ENCODE measurements at regions of chr2 and their contacts with region 1.

Region 1: DNA sequence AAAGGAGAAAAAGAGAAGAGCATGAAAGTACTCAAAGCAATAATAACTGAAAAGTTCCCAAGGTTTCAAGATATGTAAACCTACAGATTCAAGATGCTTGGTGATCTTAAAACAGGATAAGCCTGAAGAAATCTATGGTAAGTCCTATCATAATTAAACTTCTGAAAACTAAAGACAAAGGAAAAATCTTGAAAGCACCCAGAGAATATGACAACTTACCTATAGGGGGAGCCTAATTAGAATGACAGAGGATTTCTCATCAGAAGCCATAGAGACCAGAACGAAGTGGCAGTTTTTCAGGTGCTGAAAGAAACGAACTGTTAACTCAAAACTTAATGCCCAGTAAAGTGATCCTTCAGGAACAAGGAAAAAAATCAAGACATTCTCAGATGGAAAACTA is 59.7 kb downstream of the XDH start:
- DNase-seq: peak; percentile 39 to 51
- ATAC-seq: peak; percentile 50 to 83; a peak in 3 of 6 replicates
- H3K4me3 ChIP-seq: no peak overlapping the region
- H3K27ac ChIP-seq: peak overlapping the region in 1 of 2 experiments; percentile 37; a peak in 2 of 6 replicates
- H3K4me1 ChIP-seq: 0 out of 3 replicates have a peak, but pooled peaks cover 9% of the 10 kb centered on the region
- CTCF ChIP-seq: peak; percentile 54
- EP300 ChIP-seq: no peak
- POLR2A ChIP-seq: no peak
- RAD21 ChIP-seq: peak; percentile 56 to 64

Region 2: GRCh38 chr2:31270136-31270535 is 84.7 kb before region 1 on chr2:
- CTCF ChIA-PET with region 1: no interaction called
- POLR2A ChIA-PET with region 1: no interaction called
- DNase-seq: no peak
- ATAC-seq: no peak
- H3K4me3 ChIP-seq: no peak overlapping the region
- H3K27ac ChIP-seq: no peak overlapping the region
- H3K4me1 ChIP-seq: no peaks in the 10 kb centered on the region
- CTCF ChIP-seq: no peak
- EP300 ChIP-seq: no peak
- POLR2A ChIP-seq: no peak
- RAD21 ChIP-seq: no peak

Region 3: GRCh38 chr2:31384351-31384750 is 29.5 kb after region 1 on chr2:
- CTCF ChIA-PET with region 1: interaction called, 13 read pairs
- POLR2A ChIA-PET with region 1: no interaction called
- DNase-seq: peak; percentile 81 to 89
- ATAC-seq: peak; percentile 88
- H3K4me3 ChIP-seq: no peak overlapping the region
- H3K27ac ChIP-seq: peak overlapping the region; percentile 88 to 89
- H3K4me1 ChIP-seq: peaks cover 57% of the 10 kb centered on the region
- CTCF ChIP-seq: no peak
- EP300 ChIP-seq: no peak
- POLR2A ChIP-seq: no peak
- RAD21 ChIP-seq: no peak